GM13976 (cell line): ENCODE measurements at regions of chr3 and their contacts with region 1.

Region 1: GRCh38 chr3:66816090-66816761 is 181.9 kb upstream of the KBTBD8 start:
- DNase-seq: peak; percentile 45
- CTCF ChIP-seq: peak; percentile 2

Region 2: GRCh38 chr3:66276705-66277274 is 539.4 kb before region 1 on chr3:
- in situ Hi-C with region 1: loop called (anchors 5 kb)
- DNase-seq: peak; percentile 43
- CTCF ChIP-seq: peak; percentile 64

Region 3: DNA sequence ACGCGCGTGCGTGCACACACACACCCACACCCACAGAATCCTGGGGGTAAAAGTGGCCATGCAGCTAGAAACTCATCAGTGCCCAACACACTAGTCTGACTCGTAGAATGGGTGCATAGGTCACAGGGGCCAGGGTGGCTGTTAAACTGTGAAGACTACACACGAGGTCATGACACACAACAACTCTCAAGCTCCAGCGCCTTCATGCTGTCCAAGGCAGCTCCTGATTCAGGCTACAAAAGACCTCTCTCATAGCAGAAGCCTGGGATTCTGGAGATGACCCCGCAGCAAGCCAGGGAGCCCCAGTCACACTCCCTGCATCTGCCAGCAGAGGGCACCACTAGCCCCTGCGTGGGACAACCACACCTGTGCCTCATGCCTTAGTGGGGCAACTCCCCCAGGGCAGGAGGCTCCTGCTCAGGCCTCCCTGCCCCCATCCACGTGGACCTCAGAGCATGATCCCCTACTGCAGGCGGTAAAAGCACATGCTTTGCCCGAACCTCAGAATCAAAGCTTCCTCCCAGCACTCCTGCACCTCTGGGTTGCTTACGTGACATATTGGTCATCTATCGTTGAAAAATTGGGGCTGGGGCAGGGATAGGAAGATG is 408.5 kb before region 1 on chr3:
- in situ Hi-C with region 1: loop called (anchors 10 kb)
- DNase-seq: peak; percentile 91
- CTCF ChIP-seq: peak; percentile 84

Region 4: GRCh38 chr3:68345781-68346180 is 1529.6 kb after region 1 on chr3:
- in situ Hi-C with region 1: no loop called
- DNase-seq: no peak
- CTCF ChIP-seq: no peak